IMR-90 (cell line): ENCODE measurements at regions of chr15 and their contacts with region 1.

Region 1: DNA sequence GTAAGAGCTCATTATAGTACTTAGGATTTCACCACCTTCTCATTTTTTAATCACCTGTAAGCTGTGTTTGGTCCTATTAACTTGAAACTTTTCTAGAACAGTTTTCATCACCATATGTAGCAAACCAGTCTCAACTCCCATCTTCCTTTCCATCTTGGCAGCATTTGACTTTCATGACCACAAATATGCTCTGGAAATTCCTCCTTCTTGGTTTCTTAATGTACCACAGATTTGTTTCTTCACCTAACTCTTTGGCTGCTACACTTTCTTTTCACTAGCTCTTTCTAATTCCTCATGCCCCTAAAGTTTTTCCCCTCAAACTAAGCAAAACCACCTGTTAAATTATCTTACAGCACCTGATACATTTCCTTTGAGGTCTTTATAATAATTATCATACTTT is 13.2 kb upstream of the NMB start:
- DNase-seq: peak; percentile 87
- ATAC-seq: peak; percentile 81
- H3K4me3 ChIP-seq: no peak overlapping the region
- H3K27ac ChIP-seq: no peak overlapping the region; the same call in 1 of the 2 replicates
- H3K4me1 ChIP-seq: peaks cover 10% of the 10 kb centered on the region
- H3K27me3 ChIP-seq: no peaks in the 10 kb centered on the region
- CTCF ChIP-seq: no peak
- POLR2A ChIP-seq: no peak
- RAD21 ChIP-seq: no peak

Region 2: GRCh38 chr15:84648539-84648938 is 22.7 kb before region 1 on chr15:
- CTCF ChIA-PET with region 1: no interaction called
- POLR2A ChIA-PET with region 1: interaction called, 12 read pairs
- dilution Hi-C with region 1: no loop called
- in situ Hi-C with region 1: no loop called
- intact Hi-C with region 1: no loop called
- DNase-seq: no peak
- ATAC-seq: no peak
- H3K4me3 ChIP-seq: no peak overlapping the region
- H3K27ac ChIP-seq: no peak overlapping the region
- H3K4me1 ChIP-seq: peaks cover 3% of the 10 kb centered on the region
- H3K27me3 ChIP-seq: no peaks in the 10 kb centered on the region
- CTCF ChIP-seq: no peak
- POLR2A ChIP-seq: no peak
- RAD21 ChIP-seq: no peak